Testis (tissue), 5 donors: ENCODE measurements at regions of chr12 and their contacts with region 1.

Region 1: GRCh38 chr12:90254796-90255195 is 546.2 kb upstream of the ATP2B1 start:
- DNase-seq: no peak
- H3K4me3 ChIP-seq: no peak overlapping the region
- H3K27ac ChIP-seq: no peak overlapping the region
- H3K4me1 ChIP-seq: peaks cover 5% of the 10 kb centered on the region
- H3K27me3 ChIP-seq: no peaks in the 10 kb centered on the region
- CTCF ChIP-seq: no peak
- POLR2A ChIP-seq: no peak

Region 2: GRCh38 chr12:90163975-90164374 is 90.8 kb before region 1 on chr12:
- intact Hi-C with region 1: no loop called
- DNase-seq: no peak
- H3K4me3 ChIP-seq: no peak overlapping the region
- H3K27ac ChIP-seq: no peak overlapping the region
- H3K4me1 ChIP-seq: no peaks in the 10 kb centered on the region
- H3K27me3 ChIP-seq: no peaks in the 10 kb centered on the region
- CTCF ChIP-seq: no peak
- POLR2A ChIP-seq: no peak

Region 3: DNA sequence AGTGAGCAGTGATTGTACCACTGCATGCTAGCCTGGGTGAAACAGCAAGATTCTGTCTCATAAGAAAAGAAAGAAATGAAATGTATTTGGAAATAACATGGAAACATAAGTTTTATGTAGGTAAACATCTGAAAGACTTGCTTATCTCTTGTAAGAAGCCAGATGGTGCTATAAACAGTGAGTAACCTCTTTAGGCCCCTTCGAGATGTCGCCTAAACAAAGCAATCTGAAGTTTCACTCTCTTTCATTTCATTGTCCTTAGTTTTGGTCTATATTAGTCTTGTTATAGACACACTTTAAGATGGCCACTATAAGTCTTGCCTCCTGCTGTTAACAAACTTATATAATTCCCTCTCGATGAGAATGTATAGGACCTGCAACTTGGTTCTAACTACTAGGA is 73.6 kb before region 1 on chr12:
- intact Hi-C with region 1: no loop called
- DNase-seq: no peak
- H3K4me3 ChIP-seq: no peak overlapping the region
- H3K27ac ChIP-seq: no peak overlapping the region
- H3K4me1 ChIP-seq: no peaks in the 10 kb centered on the region
- H3K27me3 ChIP-seq: no peaks in the 10 kb centered on the region
- CTCF ChIP-seq: no peak
- POLR2A ChIP-seq: no peak

Region 4: GRCh38 chr12:90355710-90356355 is 101.0 kb after region 1 on chr12:
- intact Hi-C with region 1: loop called (anchors 5 kb)
- DNase-seq: no peak
- H3K4me3 ChIP-seq: no peak overlapping the region
- H3K27ac ChIP-seq: no peak overlapping the region
- H3K4me1 ChIP-seq: no peaks in the 10 kb centered on the region
- H3K27me3 ChIP-seq: no peaks in the 10 kb centered on the region
- CTCF ChIP-seq: no peak
- POLR2A ChIP-seq: no peak

Region 5: GRCh38 chr12:90460681-90461080 is 205.9 kb after region 1 on chr12:
- intact Hi-C with region 1: no loop called
- DNase-seq: no peak
- H3K4me3 ChIP-seq: no peak overlapping the region
- H3K27ac ChIP-seq: no peak overlapping the region
- H3K4me1 ChIP-seq: no peaks in the 10 kb centered on the region
- H3K27me3 ChIP-seq: no peaks in the 10 kb centered on the region
- CTCF ChIP-seq: no peak
- POLR2A ChIP-seq: no peak